ENCODE measurements at regions of chr12 and their contacts with region 1.

Region 1: GRCh38 chr12:90111791-90112580 is 403.3 kb upstream of the ATP2B1 start:
- DNase-seq: peak in 4 of 10 donors; percentile 31 to 76 (median 40)
- H3K4me3 ChIP-seq: peak overlapping the region in 26 of 59 donors; percentile 1 to 43 (median 23)
- H3K27ac ChIP-seq: peak overlapping the region in 55 of 59 donors; percentile 15 to 90 (median 62)
- H3K27me3 ChIP-seq: no peaks in the 10 kb centered on the region
- CTCF ChIP-seq: no peak

Region 2: GRCh38 chr12:89709157-89709994 is 402.6 kb before region 1 on chr12:
- intact Hi-C with region 1: loop called in 1 of 2 experiments (anchors 10 kb)
- DNase-seq: peak; percentile 95 to 98 (median 96)
- H3K4me3 ChIP-seq: peak overlapping the region; percentile 64 to 99 (median 91)
- H3K27ac ChIP-seq: peak overlapping the region; percentile 73 to 100 (median 98)
- H3K27me3 ChIP-seq: no peaks in the 10 kb centered on the region
- CTCF ChIP-seq: peak in 19 of 56 donors; percentile 5 to 51 (median 15)

Measured in dorsolateral prefrontal cortex (tissue), 120 donors.